ENCODE measurements at regions of chr11 and their contacts with region 1.

Region 1: DNA sequence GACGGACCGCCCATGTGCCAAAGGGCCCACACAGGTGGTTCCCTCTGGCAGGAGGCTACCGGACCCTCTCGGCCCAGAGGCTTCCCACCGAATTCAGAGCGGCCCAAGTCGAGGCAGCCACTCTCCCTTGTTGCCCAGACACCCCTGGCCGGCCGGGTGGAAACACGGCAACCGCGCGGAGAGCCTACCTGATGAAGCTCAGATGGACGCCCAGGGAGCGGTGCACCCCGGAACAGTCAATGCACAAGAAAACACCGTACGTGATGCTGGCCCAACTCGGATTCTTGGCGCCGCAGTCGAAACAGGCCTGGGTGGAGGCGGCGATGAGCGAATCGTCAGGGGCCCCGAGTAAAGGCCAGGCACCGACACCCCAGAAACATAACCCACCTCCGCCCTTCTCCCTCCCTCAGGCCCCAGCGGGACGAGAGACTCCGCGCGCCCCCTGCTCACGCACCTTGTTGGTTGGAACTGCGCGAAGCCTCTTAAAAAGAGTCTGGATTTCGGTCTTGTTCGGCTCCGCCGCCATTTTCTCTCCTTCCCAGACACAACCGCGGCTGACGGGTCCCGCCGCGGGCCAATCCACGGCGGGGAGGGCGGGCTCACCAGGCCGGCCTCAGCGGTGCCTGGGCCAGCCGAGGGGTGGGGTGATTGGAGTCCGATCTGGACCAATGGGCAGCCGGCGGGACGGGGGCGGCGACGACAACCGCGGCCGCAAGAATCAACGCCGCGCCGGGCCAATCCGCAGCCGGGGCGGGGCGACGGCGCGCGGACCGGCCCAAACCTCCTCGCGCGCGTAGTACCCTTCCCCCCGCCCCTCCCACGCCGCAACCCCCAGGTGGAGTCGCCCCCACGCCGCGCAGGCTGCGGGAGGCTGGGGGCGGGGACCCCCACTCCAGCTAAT is at the start of gene ARFGAP2:
- DNase-seq: peak; percentile 97
- ATAC-seq: peak; percentile 97
- H3K4me3 Mint-ChIP-seq: peak within 1 kb of the TSS; percentile 97
- H3K27ac Mint-ChIP-seq: peak within 1 kb of the TSS; percentile 99
- H3K4me1 Mint-ChIP-seq: peaks cover 45% of the 10 kb centered on the region
- H3K27me3 Mint-ChIP-seq: no peaks in the 10 kb centered on the region
- total RNA-seq, gene ARFGAP2: 89.6 to 102 TPM

Region 2: GRCh38 chr11:47259178-47259977 is 82.8 kb after region 1 on chr11:
- CTCF ChIA-PET with region 1: interaction called, 54 read pairs
- POLR2A ChIA-PET with region 1: interaction called, 4 read pairs
- DNase-seq: peak; percentile 62
- ATAC-seq: peak; percentile 78
- H3K4me3 Mint-ChIP-seq: no peak overlapping the region
- H3K27ac Mint-ChIP-seq: peak overlapping the region; percentile 62
- H3K4me1 Mint-ChIP-seq: peaks cover 35% of the 10 kb centered on the region
- H3K27me3 Mint-ChIP-seq: no peaks in the 10 kb centered on the region

Region 3: DNA sequence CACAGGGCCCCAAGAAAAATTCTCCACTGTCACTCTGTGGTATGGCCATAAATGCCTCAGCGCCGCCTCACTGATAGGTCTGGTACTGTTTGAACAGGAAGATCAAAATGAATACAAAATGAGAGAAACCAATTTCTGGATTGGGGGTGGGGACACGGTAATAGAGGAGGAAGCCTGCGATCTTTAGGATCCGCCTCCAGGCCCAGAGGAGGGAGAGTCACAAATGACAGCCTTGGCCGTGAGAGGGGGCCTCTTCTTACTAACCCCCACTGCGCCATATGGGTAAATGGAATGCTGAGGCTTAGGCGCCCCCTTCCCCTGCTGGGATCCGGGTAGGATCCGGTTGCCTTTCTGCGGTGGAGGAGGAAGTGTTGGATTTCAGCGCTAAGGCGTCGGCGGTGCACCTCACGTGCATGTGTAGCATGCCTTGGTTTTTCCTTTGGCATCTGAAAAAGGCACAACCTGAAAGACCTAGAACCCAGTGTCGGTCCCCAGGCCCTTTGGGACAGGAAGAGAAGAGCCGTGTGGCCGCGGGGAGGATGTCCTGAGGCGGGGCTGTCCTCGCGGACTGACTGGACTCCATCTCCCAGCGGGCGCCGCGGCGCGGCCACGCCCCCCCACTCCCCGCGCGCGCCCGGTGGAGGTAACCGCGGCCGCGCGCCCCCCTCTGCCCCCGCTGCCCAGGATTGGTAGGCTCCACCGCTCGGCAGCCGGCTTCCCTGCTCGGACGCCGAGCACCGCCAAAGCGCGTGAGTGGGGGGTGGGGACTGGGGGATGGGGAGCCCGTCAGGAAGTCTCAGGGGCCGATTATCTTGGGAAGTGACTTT is 92.6 kb after region 1 on chr11:
- CTCF ChIA-PET with region 1: interaction called, 15 read pairs
- POLR2A ChIA-PET with region 1: interaction called, 3 read pairs
- DNase-seq: peak; percentile 90
- ATAC-seq: peak; percentile 55
- H3K4me3 Mint-ChIP-seq: peak overlapping the region; percentile 84
- H3K27ac Mint-ChIP-seq: peak overlapping the region; percentile 98
- H3K4me1 Mint-ChIP-seq: peaks cover 68% of the 10 kb centered on the region
- H3K27me3 Mint-ChIP-seq: no peaks in the 10 kb centered on the region

Region 4: DNA sequence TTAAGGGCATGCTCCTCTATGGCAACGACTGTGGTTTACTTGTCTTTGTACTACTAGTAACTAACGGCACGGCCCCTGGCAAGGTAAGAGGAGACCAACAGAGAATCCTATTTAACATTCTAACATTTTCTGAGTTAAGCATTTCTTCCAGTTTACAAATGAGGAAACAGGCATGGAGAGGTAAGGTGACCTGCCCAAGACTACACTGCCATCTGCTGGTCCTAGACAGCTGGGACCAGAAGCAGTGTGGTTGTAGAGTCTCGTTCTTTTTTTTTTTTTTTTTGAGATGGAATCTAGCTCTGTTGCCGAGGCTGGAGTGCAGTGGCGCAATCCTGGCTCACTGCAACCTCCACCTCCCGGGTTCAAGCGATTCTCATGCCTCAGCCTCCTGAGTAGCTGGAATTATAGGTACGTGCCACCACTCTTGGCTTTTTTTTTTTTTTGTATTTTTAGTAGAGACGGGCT is 277.6 kb after region 1 on chr11:
- CTCF ChIA-PET with region 1: interaction called, 10 read pairs
- POLR2A ChIA-PET with region 1: no interaction called
- DNase-seq: peak; percentile 82
- ATAC-seq: peak; percentile 88
- H3K4me3 Mint-ChIP-seq: no peak overlapping the region
- H3K27ac Mint-ChIP-seq: no peak overlapping the region
- H3K4me1 Mint-ChIP-seq: peaks cover 3% of the 10 kb centered on the region
- H3K27me3 Mint-ChIP-seq: no peaks in the 10 kb centered on the region

Measured in activated CD8-positive, alpha-beta T cell treated with anti-CD3 and anti-CD28 coated beads, Interleukin-2, amount 10 ng/mL, durations not matched to agents 7 days and 5 days (primary cell).